ENCODE measurements at regions of chr5 and their contacts with region 1.

Region 1: GRCh38 chr5:68097066-68097465 is 118.5 kb upstream of the PIK3R1 start:
- DNase-seq: no peak
- ATAC-seq: no peak
- H3K4me3 ChIP-seq: no peak overlapping the region
- H3K4me3 Mint-ChIP-seq: no peak overlapping the region
- H3K27ac ChIP-seq: no peak overlapping the region
- H3K27ac Mint-ChIP-seq: no peak overlapping the region
- H3K4me1 ChIP-seq: no peaks in the 10 kb centered on the region
- H3K4me1 Mint-ChIP-seq: no peaks in the 10 kb centered on the region
- H3K27me3 ChIP-seq: no peaks in the 10 kb centered on the region
- H3K27me3 Mint-ChIP-seq: no peaks in the 10 kb centered on the region

Region 2: DNA sequence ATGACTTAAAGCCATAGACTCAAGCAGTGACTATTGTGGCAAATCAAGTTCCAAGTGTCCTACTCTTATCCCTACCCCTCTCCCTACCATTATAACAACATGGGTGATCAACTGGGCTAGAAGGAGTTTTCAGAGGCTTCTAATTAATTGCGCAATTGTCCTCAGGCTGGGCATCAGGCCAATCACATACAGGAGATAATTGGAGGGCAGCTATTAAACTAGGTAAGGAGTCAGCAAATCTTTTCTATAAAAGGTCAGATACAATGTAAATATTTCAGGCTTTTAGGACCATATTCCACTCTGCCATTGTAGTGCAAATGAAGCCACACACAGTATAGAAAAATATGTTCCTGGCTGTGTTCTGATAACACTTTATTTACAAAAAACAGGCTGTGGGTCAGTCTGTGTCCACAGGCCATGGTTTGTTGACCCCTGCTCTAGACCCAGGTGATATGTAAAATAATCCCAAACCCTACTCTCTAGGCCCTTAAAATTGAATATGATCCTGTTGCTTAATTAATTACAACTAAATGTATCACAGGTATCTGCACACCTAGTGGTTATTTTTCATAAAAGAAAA is 22.9 kb before region 1 on chr5:
- CTCF ChIA-PET with region 1: interaction called in 1 of 2 experiments, 14 read pairs
- POLR2A ChIA-PET with region 1: interaction called in 1 of 2 experiments, 3 read pairs
- DNase-seq: no peak
- ATAC-seq: no peak
- H3K4me3 ChIP-seq: no peak overlapping the region
- H3K4me3 Mint-ChIP-seq: no peak overlapping the region
- H3K27ac ChIP-seq: no peak overlapping the region
- H3K27ac Mint-ChIP-seq: no peak overlapping the region
- H3K4me1 ChIP-seq: no peaks in the 10 kb centered on the region
- H3K4me1 Mint-ChIP-seq: peaks cover 0 to 2% (median 0%) of the 10 kb centered on the region in 3 donors
- H3K27me3 ChIP-seq: no peaks in the 10 kb centered on the region
- H3K27me3 Mint-ChIP-seq: no peaks in the 10 kb centered on the region

Region 3: GRCh38 chr5:68086857-68087256 is 10.2 kb before region 1 on chr5:
- CTCF ChIA-PET with region 1: no interaction called
- POLR2A ChIA-PET with region 1: no interaction called
- DNase-seq: no peak
- ATAC-seq: no peak
- H3K4me3 ChIP-seq: no peak overlapping the region
- H3K4me3 Mint-ChIP-seq: no peak overlapping the region
- H3K27ac ChIP-seq: no peak overlapping the region
- H3K27ac Mint-ChIP-seq: no peak overlapping the region
- H3K4me1 ChIP-seq: no peaks in the 10 kb centered on the region
- H3K4me1 Mint-ChIP-seq: no peaks in the 10 kb centered on the region
- H3K27me3 ChIP-seq: no peaks in the 10 kb centered on the region
- H3K27me3 Mint-ChIP-seq: peaks cover 2 to 6% of the 10 kb centered on the region in 2 donors

Region 4: DNA sequence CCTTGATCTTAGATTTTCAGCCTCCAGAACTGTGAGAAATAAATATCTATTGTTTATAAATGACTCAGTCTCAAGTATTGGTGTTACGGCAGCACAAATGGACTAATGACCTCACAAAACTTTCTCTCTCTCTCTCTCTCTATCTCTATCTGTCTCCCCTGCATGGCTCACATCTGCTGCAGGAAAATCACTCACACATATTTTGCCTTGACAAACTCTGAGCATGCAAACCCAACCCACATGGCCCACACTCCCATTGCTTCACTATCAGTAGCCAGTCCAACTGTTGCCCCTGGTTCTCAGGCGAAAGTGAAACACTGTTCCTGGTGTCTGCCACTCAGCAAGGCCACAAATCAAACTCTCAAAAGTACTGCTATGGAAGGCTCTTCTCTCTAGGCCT is 52.1 kb after region 1 on chr5:
- CTCF ChIA-PET with region 1: no interaction called
- POLR2A ChIA-PET with region 1: no interaction called
- DNase-seq: no peak
- ATAC-seq: no peak
- H3K4me3 ChIP-seq: no peak overlapping the region
- H3K4me3 Mint-ChIP-seq: no peak overlapping the region
- H3K27ac ChIP-seq: no peak overlapping the region
- H3K27ac Mint-ChIP-seq: no peak overlapping the region
- H3K4me1 ChIP-seq: no peaks in the 10 kb centered on the region
- H3K4me1 Mint-ChIP-seq: no peaks in the 10 kb centered on the region
- H3K27me3 ChIP-seq: no peaks in the 10 kb centered on the region
- H3K27me3 Mint-ChIP-seq: no peaks in the 10 kb centered on the region

Measured in T-cell (primary cell).